GM12878 (cell line): ENCODE measurements at regions of chr19 and their contacts with region 1.

Region 1: DNA sequence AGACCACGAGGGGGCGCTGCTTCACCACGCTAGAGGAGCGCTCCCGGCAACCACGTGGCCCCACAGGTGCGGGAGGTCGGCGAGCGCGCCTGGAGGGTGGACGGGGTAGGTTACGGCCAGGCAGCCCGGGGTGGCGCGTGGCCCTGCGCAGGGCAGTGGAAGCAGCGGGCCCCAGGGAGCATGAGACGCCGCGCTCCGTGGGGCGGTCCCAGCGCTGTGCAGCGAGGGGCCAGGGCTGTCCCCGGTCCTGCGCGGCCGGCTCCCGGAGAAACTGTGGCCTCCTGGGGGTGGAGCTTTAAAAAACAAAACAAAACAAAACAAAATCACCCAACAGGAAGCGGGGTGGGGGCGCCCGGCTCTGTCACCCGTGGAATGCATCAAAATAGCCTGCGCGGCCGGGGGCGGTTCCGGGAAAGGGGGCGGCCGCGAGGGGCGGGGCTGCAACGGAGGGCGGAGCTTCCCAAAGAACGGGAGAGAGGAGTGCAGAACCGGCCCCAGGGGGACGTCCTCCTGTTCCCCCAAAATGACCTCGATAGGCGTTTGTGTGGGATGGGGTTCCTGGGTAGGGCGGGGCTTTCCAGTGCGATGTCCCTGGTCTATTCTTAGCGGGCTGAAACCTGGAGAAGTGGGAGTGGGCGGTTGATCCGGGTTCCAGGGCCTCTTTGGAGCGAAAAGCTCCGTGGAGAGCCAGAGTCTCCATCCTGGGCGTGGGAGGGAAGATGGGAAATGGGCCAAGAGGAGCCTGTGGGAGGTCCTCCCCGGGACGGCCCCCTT is 27.3 kb downstream of the NUMBL start:
- DNase-seq: peak; percentile 24
- ATAC-seq: peak; percentile 97
- H3K4me3 ChIP-seq: peak overlapping the region; percentile 83
- H3K27ac ChIP-seq: no peak overlapping the region
- H3K4me1 ChIP-seq: peaks cover 6% of the 10 kb centered on the region
- H3K27me3 ChIP-seq: no peaks in the 10 kb centered on the region
- CTCF ChIP-seq: peak in 2 of 3 experiments; percentile 94 to 95; a peak in 5 of 6 replicates
- EP300 ChIP-seq: no peak
- POLR2A ChIP-seq: peak; percentile 68
- RAD21 ChIP-seq: peak; percentile 90

Region 2: DNA sequence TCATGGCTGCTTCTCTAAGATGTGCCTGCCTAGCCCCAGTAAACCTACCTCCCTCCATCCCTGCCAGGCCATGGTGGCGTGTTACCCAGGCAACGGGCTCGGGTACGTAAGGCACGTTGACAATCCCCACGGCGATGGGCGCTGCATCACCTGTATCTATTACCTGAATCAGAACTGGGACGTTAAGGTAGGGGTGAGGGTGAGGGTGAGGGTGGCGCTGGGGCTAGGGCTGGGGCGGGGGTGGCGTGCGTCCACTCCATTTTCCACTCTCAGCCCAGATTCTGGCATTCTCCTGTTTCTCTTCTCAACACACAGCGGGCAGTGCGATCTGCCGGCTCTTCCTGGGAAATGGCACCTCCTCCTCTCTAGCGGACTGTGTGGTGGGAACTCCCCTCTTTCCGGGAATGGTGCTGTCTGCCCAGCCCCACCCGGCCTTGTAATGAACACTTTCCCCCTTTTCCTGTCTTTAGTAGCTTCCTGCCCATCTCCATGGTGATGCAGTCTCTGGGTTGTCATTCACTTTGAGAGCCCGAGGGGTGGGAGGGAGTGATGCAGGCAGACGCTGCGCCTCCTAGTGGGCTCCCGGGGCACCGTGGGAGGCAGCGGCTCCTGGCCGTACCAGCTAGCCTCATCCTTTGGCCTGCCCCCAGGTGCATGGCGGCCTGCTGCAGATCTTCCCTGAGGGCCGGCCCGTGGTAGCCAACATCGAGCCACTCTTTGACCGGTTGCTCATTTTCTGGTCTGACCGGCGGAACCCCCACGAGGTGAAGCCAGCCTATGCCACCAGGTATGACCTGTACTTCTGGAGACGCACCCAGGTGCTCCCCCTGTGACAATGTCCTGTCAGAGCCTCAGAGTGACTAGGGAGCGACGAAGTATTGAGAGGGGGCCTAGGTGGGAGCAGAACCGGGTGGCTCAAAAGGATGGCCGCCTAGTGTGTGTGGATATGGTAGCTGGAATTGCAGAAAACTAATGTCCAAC is 143.7 kb after region 1 on chr19:
- CTCF ChIA-PET with region 1: interaction called, 51 read pairs
- POLR2A ChIA-PET with region 1: interaction called, 4 read pairs
- RAD21 ChIA-PET with region 1: interaction called, 12 read pairs
- SMC1A ChIA-PET with region 1: interaction called, 11 read pairs
- in situ Hi-C with region 1: no loop called
- intact Hi-C with region 1: no loop called
- DNase-seq: no peak
- ATAC-seq: peak; percentile 77
- H3K4me3 ChIP-seq: no peak overlapping the region
- H3K27ac ChIP-seq: no peak overlapping the region
- H3K4me1 ChIP-seq: peaks cover 40% of the 10 kb centered on the region
- H3K27me3 ChIP-seq: no peaks in the 10 kb centered on the region
- CTCF ChIP-seq: peak; percentile 80 to 95 (median 87)
- EP300 ChIP-seq: no peak
- POLR2A ChIP-seq: peak; percentile 52
- RAD21 ChIP-seq: peak; percentile 53

Region 3: GRCh38 chr19:40813182-40813958 is 150.3 kb after region 1 on chr19:
- CTCF ChIA-PET with region 1: interaction called, 76 read pairs
- POLR2A ChIA-PET with region 1: interaction called, 3 read pairs
- RAD21 ChIA-PET with region 1: interaction called, 46 read pairs
- SMC1A ChIA-PET with region 1: interaction called, 56 read pairs
- in situ Hi-C with region 1: no loop called
- intact Hi-C with region 1: no loop called
- DNase-seq: no peak
- ATAC-seq: no peak
- H3K4me3 ChIP-seq: no peak overlapping the region
- H3K27ac ChIP-seq: no peak overlapping the region
- H3K4me1 ChIP-seq: peaks cover 4% of the 10 kb centered on the region
- H3K27me3 ChIP-seq: no peaks in the 10 kb centered on the region
- CTCF ChIP-seq: no peak
- EP300 ChIP-seq: no peak
- POLR2A ChIP-seq: peak; percentile 29; the same call in 1 of the 2 replicates
- RAD21 ChIP-seq: no peak

Region 4: GRCh38 chr19:40822161-40822560 is 159.1 kb after region 1 on chr19:
- CTCF ChIA-PET with region 1: interaction called, 76 read pairs
- POLR2A ChIA-PET with region 1: no interaction called
- RAD21 ChIA-PET with region 1: interaction called, 46 read pairs
- SMC1A ChIA-PET with region 1: interaction called, 56 read pairs
- in situ Hi-C with region 1: loop called (anchors 5 kb)
- intact Hi-C with region 1: loop called (anchors 1 kb)
- DNase-seq: no peak
- ATAC-seq: no peak
- H3K4me3 ChIP-seq: no peak overlapping the region
- H3K27ac ChIP-seq: no peak overlapping the region
- H3K4me1 ChIP-seq: peaks cover 11% of the 10 kb centered on the region
- H3K27me3 ChIP-seq: no peaks in the 10 kb centered on the region
- CTCF ChIP-seq: no peak
- EP300 ChIP-seq: no peak
- POLR2A ChIP-seq: no peak
- RAD21 ChIP-seq: no peak

Region 5: GRCh38 chr19:40908976-40909375 is 245.9 kb after region 1 on chr19:
- CTCF ChIA-PET with region 1: interaction called, 5 read pairs
- POLR2A ChIA-PET with region 1: no interaction called
- RAD21 ChIA-PET with region 1: interaction called, 3 read pairs
- SMC1A ChIA-PET with region 1: no interaction called
- in situ Hi-C with region 1: no loop called
- intact Hi-C with region 1: loop called (anchors 1 kb)
- DNase-seq: no peak
- ATAC-seq: peak; percentile 63
- H3K4me3 ChIP-seq: no peak overlapping the region
- H3K27ac ChIP-seq: no peak overlapping the region
- H3K4me1 ChIP-seq: no peaks in the 10 kb centered on the region
- H3K27me3 ChIP-seq: no peaks in the 10 kb centered on the region; a peak in 2 of 4 replicates
- CTCF ChIP-seq: peak; percentile 31 to 40 (median 37); a peak in 4 of 6 replicates
- EP300 ChIP-seq: no peak
- POLR2A ChIP-seq: no peak
- RAD21 ChIP-seq: 0 out of 2 replicates have a peak, but pooled peaks have one; percentile 28

Region 6: GRCh38 chr19:40974633-40975037 is 311.5 kb after region 1 on chr19:
- CTCF ChIA-PET with region 1: no interaction called
- POLR2A ChIA-PET with region 1: no interaction called
- RAD21 ChIA-PET with region 1: no interaction called
- SMC1A ChIA-PET with region 1: no interaction called
- in situ Hi-C with region 1: no loop called
- intact Hi-C with region 1: loop called (anchors 5 kb)
- DNase-seq: peak; percentile 3
- ATAC-seq: peak; percentile 89
- H3K4me3 ChIP-seq: no peak overlapping the region
- H3K27ac ChIP-seq: no peak overlapping the region
- H3K4me1 ChIP-seq: no peaks in the 10 kb centered on the region
- H3K27me3 ChIP-seq: no peaks in the 10 kb centered on the region
- CTCF ChIP-seq: peak; percentile 64 to 74 (median 73)
- EP300 ChIP-seq: no peak
- POLR2A ChIP-seq: no peak
- RAD21 ChIP-seq: peak; percentile 57

Region 7: DNA sequence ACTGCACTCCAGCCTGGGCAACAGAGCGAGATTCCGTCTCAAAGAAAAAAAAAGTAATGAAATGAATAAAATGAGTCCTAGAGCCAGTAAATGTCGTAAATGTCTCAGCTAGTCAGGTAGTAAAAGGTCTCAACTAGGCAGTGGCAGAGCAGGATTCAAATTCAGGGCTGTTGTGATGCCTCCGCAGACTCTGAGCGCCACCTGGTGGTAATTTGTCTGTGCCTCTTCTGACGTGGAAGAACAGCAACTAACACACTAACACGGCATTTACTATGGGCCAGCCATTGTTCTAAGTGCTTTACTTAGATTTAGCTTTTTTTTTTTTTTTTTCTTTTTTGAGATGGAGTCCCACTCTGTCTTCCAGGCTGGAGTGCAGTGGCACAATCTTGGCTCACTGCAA is 481.3 kb after region 1 on chr19:
- CTCF ChIA-PET with region 1: interaction called, 5 read pairs
- POLR2A ChIA-PET with region 1: no interaction called
- RAD21 ChIA-PET with region 1: no interaction called
- SMC1A ChIA-PET with region 1: no interaction called
- in situ Hi-C with region 1: no loop called
- intact Hi-C with region 1: loop called (anchors 1 kb)
- DNase-seq: peak; percentile 11
- ATAC-seq: peak; percentile 90
- H3K4me3 ChIP-seq: no peak overlapping the region
- H3K27ac ChIP-seq: no peak overlapping the region
- H3K4me1 ChIP-seq: no peaks in the 10 kb centered on the region
- H3K27me3 ChIP-seq: no peaks in the 10 kb centered on the region
- CTCF ChIP-seq: peak; percentile 75 to 86 (median 78)
- EP300 ChIP-seq: no peak
- POLR2A ChIP-seq: no peak
- RAD21 ChIP-seq: peak; percentile 69

Region 8: DNA sequence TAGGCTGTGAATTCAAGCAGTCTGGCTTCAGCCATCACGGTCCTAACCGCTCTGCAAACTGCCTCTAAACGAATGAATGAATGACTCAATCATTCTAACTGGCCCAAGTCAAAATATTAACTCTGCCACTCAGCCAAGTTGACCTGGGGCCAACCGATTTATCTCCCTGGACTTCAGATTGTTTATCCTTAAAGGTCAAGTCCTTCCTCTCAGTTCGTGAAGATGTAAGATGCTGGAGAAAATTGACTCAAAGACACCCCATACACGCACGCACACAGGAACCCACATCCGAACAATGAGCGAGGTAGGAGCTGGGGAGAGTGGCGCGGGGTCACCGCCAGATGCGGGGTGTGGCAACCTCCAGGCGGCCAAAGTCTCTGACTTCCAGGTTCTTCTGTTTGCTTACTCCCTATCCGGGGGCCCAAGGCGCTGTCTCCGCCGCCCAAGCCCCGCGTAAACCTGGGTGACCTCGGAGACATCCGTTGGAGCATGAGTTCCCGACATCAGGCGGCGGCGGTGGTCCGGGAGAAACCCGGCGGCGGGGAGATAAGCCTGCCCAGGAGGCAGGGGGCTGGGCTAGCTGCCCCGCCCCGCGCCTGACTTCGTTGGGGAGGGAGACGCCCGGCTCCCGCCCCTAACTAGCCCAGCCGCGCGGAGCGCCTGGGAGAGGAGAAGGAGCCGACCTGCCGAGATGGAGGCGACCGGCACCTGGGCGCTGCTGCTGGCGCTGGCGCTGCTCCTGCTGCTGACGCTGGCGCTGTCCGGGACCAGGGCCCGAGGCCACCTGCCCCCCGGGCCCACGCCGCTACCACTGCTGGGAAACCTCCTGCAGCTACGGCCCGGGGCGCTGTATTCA is 529.7 kb after region 1 on chr19 and contains the start of gene CYP2S1:
- CTCF ChIA-PET with region 1: no interaction called
- POLR2A ChIA-PET with region 1: no interaction called
- RAD21 ChIA-PET with region 1: no interaction called
- SMC1A ChIA-PET with region 1: no interaction called
- in situ Hi-C with region 1: no loop called
- intact Hi-C with region 1: no loop called
- DNase-seq: no peak
- ATAC-seq: no peak
- H3K4me3 ChIP-seq: no peak within 1 kb of the TSS
- H3K27ac ChIP-seq: no peak within 1 kb of the TSS
- H3K4me1 ChIP-seq: no peaks in the 10 kb centered on the region; the same call in 1 of the 2 replicates
- H3K27me3 ChIP-seq: peaks cover 2 to 15% of the 10 kb centered on the region in 2 experiments; a peak in 3 of 4 replicates
- CTCF ChIP-seq: no peak
- EP300 ChIP-seq: no peak
- POLR2A ChIP-seq: no peak
- RAD21 ChIP-seq: no peak
- polyA plus RNA-seq, gene CYP2S1: 0.04 to 0.08 TPM